ENCODE measurements at regions of chr17 and their contacts with region 1.

Region 1: DNA sequence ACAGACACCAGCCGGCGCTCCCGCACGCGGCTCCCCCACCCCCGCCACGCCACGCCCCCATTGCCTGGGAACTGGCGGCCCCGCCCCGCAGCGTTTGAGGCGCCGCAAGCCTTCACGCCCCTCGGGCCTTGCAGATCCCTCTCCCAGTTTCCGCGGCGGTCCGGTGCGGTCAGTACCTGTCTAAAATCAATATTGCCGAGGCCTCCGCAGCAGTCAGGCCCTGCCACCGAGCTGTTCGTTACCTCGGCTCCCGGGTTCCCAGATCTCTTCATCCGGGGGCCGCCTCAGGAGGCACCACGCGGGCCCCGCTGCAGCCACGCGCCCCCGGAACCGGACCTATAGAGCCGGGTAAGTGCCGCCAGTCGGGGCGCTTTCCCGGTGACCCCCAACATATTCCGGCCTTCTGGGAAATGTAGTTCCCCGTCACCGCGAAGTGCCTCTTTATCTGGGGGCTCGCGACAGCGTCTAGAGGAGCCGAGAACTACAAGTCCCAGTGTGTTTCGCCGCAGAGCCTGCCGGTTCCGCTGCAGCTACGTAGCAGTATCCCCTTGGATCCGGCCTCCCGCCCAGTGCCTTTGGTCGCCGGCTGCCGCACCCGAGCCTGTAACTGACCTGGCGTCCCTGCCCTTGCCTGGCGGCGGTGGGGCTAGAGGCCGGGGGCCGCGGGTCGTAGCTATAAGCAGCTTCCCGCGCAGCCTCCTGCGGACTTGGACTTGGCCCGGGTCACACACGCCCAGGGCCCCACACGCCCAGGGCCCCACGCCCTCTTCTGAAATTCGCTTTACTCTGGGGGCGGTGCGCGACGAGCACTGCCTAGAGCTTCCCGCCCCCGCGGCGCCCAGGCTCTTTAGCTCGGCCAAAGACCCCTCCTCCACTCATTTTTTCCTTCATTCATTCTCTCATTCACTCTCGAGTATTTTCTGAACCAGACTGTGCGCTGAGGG is at the start of gene PEMT:
- DNase-seq: peak; percentile 96
- H3K4me3 Mint-ChIP-seq: peak within 1 kb of the TSS; percentile 88
- H3K27ac Mint-ChIP-seq: peak within 1 kb of the TSS; percentile 88
- H3K4me1 Mint-ChIP-seq: peaks cover 23% of the 10 kb centered on the region
- H3K27me3 Mint-ChIP-seq: no peaks in the 10 kb centered on the region
- total RNA-seq, gene PEMT: 38.3 to 41.1 TPM

Region 2: GRCh38 chr17:17280613-17281549 is 310.7 kb before region 1 on chr17 and contains the start of gene COPS3:
- CTCF ChIA-PET with region 1: no interaction called
- POLR2A ChIA-PET with region 1: no interaction called
- intact Hi-C with region 1: loop called (anchors 5 kb)
- DNase-seq: peak; percentile 98
- H3K4me3 Mint-ChIP-seq: peak within 1 kb of the TSS; percentile 87
- H3K27ac Mint-ChIP-seq: peak within 1 kb of the TSS; percentile 83
- H3K4me1 Mint-ChIP-seq: peaks cover 31% of the 10 kb centered on the region
- H3K27me3 Mint-ChIP-seq: no peaks in the 10 kb centered on the region
- total RNA-seq, gene COPS3: 96.1 to 104 TPM

Region 3: GRCh38 chr17:17476865-17477467 is 114.7 kb before region 1 on chr17 and contains the start of gene MED9:
- CTCF ChIA-PET with region 1: interaction called, 3 read pairs
- POLR2A ChIA-PET with region 1: no interaction called
- intact Hi-C with region 1: loop called (anchors 5 kb)
- DNase-seq: peak; percentile 96
- H3K4me3 Mint-ChIP-seq: peak within 1 kb of the TSS; percentile 91
- H3K27ac Mint-ChIP-seq: peak within 1 kb of the TSS; percentile 80
- H3K4me1 Mint-ChIP-seq: peaks cover 48% of the 10 kb centered on the region
- H3K27me3 Mint-ChIP-seq: no peaks in the 10 kb centered on the region
- total RNA-seq, gene MED9: 12.1 to 12.2 TPM

Region 4: DNA sequence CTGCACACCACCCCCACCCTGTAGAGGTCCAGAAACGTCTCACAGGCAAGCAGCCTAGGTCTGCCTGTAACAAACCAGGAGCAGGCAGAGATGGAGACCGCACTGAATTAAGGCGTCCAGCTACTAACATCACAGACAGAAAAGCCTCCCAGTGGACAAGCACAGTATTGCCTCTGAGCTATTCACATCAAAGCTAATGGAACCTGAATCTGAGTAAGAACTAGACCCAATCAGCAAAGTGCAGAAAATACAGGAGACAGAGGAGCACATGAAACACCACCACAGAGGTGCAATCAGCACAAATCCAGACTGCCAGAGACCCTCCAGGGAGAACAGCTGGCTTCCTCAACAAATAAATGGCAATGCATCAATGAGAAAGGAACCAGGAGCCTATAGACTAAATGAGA is 22.1 kb after region 1 on chr17:
- CTCF ChIA-PET with region 1: interaction called, 12 read pairs
- POLR2A ChIA-PET with region 1: no interaction called
- intact Hi-C with region 1: no loop called
- DNase-seq: peak; percentile 60
- H3K4me3 Mint-ChIP-seq: no peak overlapping the region
- H3K27ac Mint-ChIP-seq: no peak overlapping the region
- H3K4me1 Mint-ChIP-seq: no peaks in the 10 kb centered on the region
- H3K27me3 Mint-ChIP-seq: no peaks in the 10 kb centered on the region

Region 5: GRCh38 chr17:17628388-17629008 is 36.9 kb after region 1 on chr17:
- CTCF ChIA-PET with region 1: no interaction called
- POLR2A ChIA-PET with region 1: no interaction called
- intact Hi-C with region 1: loop called (anchors 2 kb)
- DNase-seq: peak; percentile 67
- H3K4me3 Mint-ChIP-seq: peak overlapping the region; percentile 78
- H3K27ac Mint-ChIP-seq: peak overlapping the region; percentile 85
- H3K4me1 Mint-ChIP-seq: peaks cover 9% of the 10 kb centered on the region
- H3K27me3 Mint-ChIP-seq: no peaks in the 10 kb centered on the region

Region 6: GRCh38 chr17:17675925-17676534 is 84.4 kb after region 1 on chr17:
- CTCF ChIA-PET with region 1: no interaction called
- POLR2A ChIA-PET with region 1: no interaction called
- intact Hi-C with region 1: loop called (anchors 10 kb)
- DNase-seq: peak; percentile 40
- H3K4me3 Mint-ChIP-seq: no peak overlapping the region
- H3K27ac Mint-ChIP-seq: no peak overlapping the region
- H3K4me1 Mint-ChIP-seq: peaks cover 20% of the 10 kb centered on the region
- H3K27me3 Mint-ChIP-seq: no peaks in the 10 kb centered on the region

Region 7: DNA sequence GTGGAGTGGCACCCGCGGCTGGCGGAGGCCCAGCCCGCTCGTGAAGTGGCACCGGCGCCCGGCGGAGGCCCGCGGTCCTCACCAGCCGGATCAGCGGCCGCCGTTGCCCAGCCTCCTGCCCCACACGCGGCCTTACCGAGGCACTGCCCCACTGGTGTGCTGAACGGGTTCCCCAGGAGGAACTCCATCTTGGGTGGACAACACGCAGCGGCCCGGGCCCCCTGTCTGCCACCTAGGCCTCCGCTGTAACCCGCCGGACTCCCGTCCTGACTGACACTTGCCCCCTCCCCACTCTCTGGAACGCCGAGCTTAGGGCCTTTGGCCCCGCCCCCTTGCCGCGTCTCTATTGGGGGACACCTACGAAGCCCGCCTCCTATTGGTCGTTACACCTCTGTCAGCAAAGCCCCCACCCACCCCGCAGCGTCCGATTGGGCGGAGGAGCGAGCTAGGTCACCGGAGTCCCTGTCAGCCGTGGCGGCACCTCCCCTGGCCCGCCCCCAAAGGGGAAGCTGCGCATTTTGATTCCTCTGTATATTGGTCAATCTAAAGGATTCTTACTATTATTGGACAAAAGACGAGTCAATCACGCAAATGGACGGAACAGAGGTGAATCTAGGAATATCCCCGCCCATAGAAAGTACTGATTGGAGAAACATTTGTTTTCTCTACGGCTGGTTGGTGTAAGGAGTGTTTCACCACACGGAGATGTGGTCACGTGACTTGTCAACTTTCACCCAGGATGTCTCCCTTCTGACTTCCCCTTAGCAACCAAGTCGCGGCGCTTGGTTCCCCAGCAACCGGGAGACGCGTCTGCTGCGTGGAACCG is 380.7 kb after region 1 on chr17 and contains the starts of genes DRC3 and TOM1L2:
- CTCF ChIA-PET with region 1: no interaction called
- POLR2A ChIA-PET with region 1: no interaction called
- intact Hi-C with region 1: loop called (anchors 10 kb)
- DNase-seq: peak; percentile 100
- H3K4me3 Mint-ChIP-seq: peak within 1 kb of the TSS; percentile 91
- H3K27ac Mint-ChIP-seq: peak within 1 kb of the TSS; percentile 78
- H3K4me1 Mint-ChIP-seq: peaks cover 35% of the 10 kb centered on the region
- H3K27me3 Mint-ChIP-seq: no peaks in the 10 kb centered on the region
- total RNA-seq, gene DRC3: 0.34 to 0.52 TPM
- total RNA-seq, gene TOM1L2: 11.1 to 12.7 TPM

Measured in activated CD4-positive, alpha-beta memory T cell treated with anti-CD3 and anti-CD28 coated beads for 36 hours (primary cell).